Activated T-helper 1 cell treated with anti-CD3 and anti-CD28 coated beads, Interleukin-12 subunit alpha, Interleukin-12 subunit beta, Interleukin-2, Interleukin-4 antibody, amounts not matched to agents 30 ng/mL and 10 ng/mL and 1 ng/mL, durations not matched to agents 14 hours and 24 hours and 36 hours (primary cell): ENCODE measurements at regions of chr17 and their contacts with region 1.

Region 1: DNA sequence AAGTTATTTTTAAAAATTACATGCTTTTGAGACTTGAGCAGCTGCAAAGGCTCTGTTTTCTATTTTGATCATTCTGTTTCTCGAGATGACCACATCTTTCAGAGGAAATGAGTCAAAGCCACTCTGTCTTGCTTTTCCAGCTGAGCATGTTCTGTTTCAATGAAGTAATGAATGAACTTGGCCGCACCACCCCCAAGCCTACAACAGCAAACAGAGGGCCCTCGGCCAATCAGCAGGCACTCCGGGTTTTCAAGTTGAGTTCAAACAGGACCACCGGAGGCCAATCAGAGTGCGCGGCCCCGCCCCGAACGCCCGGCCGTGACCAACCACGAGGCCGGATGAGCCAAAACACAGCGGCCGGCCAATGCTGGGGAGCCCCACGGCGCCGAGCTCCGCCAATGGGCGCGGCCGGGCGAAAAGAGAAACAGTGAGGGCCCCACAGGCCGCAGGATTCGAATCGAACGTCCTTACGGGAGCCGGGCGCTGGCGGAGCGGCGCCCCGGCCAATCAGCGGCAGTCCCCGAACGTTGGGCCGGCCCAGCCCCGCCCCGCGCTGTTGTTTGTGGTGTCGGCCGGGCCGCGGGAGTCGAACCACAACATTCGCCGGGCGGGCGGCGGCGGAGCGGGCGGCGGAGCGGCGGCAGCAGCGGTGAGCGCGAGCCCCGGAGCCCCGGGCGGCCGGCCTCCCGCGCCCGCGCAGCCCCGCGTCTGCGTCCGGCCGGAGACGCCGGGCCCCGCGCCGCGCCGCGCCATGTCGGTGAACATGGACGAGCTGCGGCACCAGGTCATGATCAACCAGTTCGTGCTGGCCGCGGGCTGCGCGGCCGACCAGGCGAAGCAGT is at the start of gene UBALD2:
- DNase-seq: peak; percentile 99
- H3K4me3 Mint-ChIP-seq: peak within 1 kb of the TSS; percentile 94
- H3K27ac Mint-ChIP-seq: peak within 1 kb of the TSS; percentile 94
- H3K4me1 Mint-ChIP-seq: peaks cover 63% of the 10 kb centered on the region
- H3K27me3 Mint-ChIP-seq: no peaks in the 10 kb centered on the region
- total RNA-seq, gene UBALD2: 206 and 217 TPM in 2 replicates

Region 2: GRCh38 chr17:76240461-76241203 is 24.3 kb before region 1 on chr17 and contains the start of gene RNF157:
- intact Hi-C with region 1: loop called (anchors 1 kb)
- DNase-seq: peak; percentile 75
- H3K4me3 Mint-ChIP-seq: peak within 1 kb of the TSS; percentile 90
- H3K27ac Mint-ChIP-seq: peak within 1 kb of the TSS; percentile 90
- H3K4me1 Mint-ChIP-seq: peaks cover 69% of the 10 kb centered on the region
- H3K27me3 Mint-ChIP-seq: no peaks in the 10 kb centered on the region
- total RNA-seq, gene RNF157: 50.4 and 51.7 TPM in 2 replicates

Region 3: DNA sequence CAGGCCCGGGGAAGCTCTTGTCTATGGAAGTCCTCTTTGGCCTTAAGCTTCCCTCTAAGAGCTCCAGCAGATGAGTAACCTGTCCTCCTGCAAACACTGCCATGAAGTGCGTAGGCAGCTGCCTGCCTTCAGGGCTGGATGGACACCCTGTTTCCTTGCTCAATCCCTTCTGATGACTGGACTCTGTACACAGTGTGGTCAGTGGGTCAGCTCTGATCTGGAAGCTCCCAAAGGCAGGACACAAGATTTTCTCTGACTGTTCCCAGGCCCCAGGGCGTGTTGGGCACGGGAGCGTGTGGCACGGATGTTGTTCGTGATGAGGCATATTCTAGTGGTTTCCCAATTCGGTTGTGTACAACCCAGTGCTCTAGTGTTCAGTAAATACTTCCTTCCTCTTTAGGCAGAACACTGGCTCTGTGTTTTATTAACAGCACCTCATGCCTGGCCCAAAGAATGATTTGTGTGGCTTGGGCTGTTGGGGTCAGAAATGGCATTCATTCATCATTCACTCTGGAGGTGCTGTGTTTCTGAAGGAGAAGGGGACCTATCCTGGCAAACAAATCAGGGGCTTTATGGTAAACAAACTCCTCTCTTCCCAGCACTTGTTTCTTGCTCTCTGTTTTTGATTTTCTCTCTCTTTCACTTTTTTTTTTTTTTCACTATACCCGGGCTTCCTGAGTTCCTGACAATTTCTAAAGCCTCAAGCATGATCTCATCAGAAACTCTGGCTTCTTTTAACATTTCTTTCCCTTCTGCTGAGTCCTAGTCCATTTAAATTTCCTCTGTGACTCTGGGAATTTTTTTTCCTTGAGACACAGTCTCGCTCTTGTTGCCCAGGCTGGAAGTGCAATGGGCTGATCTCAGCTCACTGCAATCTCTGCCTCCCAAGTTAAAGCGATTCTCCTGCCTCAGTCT is 12.7 kb before region 1 on chr17:
- intact Hi-C with region 1: loop called (anchors 1 kb)
- DNase-seq: peak; percentile 48
- H3K4me3 Mint-ChIP-seq: peak overlapping the region; percentile 81
- H3K27ac Mint-ChIP-seq: peak overlapping the region; percentile 98
- H3K4me1 Mint-ChIP-seq: peaks cover 64% of the 10 kb centered on the region
- H3K27me3 Mint-ChIP-seq: no peaks in the 10 kb centered on the region